Mammary epithelial cell (primary cell): ENCODE measurements at regions of chr12 and their contacts with region 1.

Region 1: DNA sequence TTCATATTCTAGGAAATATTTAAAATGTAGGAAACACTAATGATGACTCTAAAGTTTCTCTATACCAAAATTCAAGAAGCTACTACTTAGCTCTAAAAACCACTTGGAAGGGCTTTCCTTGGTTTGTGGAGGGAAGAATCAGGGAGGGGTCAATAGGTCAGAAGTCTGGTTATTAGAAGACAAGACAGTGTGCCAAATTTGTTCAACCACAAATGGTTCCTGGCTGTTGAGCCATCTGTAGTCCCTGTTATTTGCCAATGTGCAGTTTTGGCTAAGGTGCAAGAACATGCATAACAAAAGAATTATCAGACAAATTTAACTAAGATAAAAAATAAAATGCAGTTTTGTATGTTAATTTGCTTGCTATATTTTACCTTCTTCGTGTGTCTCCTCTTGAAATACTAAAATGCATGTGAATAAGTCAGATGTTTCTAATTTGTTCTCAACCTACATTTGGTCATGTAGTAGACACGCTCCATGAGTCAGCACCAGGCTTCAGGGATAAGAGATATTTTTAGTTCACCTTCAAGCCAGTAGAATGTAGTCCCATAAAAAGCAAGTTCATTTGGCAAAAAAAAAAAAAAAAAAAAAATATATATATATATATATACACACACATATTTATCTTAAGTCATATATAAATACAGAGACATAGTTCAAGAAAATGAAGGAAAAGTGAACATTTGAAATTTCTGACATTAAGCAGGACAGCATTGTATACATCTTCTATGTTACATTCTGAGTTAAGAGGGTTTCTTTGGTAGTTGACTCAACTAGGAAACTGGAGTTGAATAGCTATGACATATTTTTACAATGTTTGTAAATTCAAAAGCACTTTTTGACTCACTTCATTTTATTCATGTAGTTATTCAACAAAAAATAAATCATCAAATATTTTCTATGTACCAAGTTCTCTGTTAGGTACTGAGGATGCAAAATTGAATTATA is 123.3 kb downstream of the KCNC2 start:
- DNase-seq: no peak
- H3K4me3 ChIP-seq: no peak overlapping the region
- H3K27ac ChIP-seq: no peak overlapping the region
- H3K4me1 ChIP-seq: no peaks in the 10 kb centered on the region
- H3K27me3 ChIP-seq: no peaks in the 10 kb centered on the region
- CTCF ChIP-seq: no peak

Region 2: DNA sequence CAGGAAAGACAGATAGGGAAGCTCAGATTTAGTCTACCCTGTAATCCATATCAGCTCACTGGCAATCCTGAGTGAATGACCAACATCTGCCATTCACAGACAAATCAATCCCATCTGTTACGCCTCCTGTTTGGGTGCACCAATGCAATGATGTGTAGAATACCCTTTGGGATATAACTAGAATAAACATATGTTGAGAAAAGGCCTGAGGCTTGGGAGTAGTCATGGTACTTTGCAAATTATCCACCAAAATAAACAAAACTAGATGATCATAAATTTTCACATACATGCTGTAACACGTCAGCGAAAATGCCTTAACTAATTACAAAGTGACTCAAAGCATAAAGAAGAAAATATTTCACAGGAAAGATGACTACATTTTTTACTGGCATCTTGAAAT is 44.5 kb after region 1 on chr12:
- CTCF ChIA-PET with region 1: no interaction called
- dilution Hi-C with region 1: no loop called
- in situ Hi-C with region 1: no loop called
- intact Hi-C with region 1: no loop called
- DNase-seq: peak; percentile 83
- H3K4me3 ChIP-seq: no peak overlapping the region
- H3K27ac ChIP-seq: no peak overlapping the region
- H3K4me1 ChIP-seq: peaks cover 6% of the 10 kb centered on the region
- H3K27me3 ChIP-seq: no peaks in the 10 kb centered on the region
- CTCF ChIP-seq: no peak

Region 3: DNA sequence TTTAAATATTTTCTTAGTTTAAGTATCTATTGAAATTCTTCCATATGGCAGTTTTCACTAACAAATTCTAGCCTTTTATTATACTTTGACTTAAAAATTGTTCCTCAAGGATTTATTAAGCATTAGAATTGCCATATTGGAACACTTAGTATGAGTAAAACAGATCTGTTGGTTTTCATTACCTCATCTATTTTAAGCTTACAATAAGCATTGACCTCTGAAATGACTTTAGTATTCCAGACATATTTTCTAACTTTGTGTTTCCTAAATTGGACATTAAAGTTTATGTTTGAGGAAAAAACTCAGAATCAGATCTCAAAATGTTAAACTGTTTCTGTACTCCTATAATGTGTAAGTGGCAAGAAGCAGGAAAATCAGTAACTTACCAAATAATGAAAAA is 1744.1 kb after region 1 on chr12:
- CTCF ChIA-PET with region 1: interaction called, 11 read pairs
- dilution Hi-C with region 1: no loop called
- in situ Hi-C with region 1: no loop called
- intact Hi-C with region 1: no loop called
- DNase-seq: no peak
- H3K4me3 ChIP-seq: no peak overlapping the region
- H3K27ac ChIP-seq: no peak overlapping the region
- H3K4me1 ChIP-seq: no peaks in the 10 kb centered on the region
- H3K27me3 ChIP-seq: no peaks in the 10 kb centered on the region
- CTCF ChIP-seq: no peak